ENCODE measurements at regions of chr10 and their contacts with region 1.

Region 1: GRCh38 chr10:72273410-72274212 is at the start of gene DDIT4:
- DNase-seq: peak; percentile 100
- ATAC-seq: peak; percentile 94
- H3K4me3 Mint-ChIP-seq: peak within 1 kb of the TSS; percentile 98
- H3K27ac Mint-ChIP-seq: peak within 1 kb of the TSS; percentile 98
- H3K4me1 Mint-ChIP-seq: peaks cover 50% of the 10 kb centered on the region
- H3K27me3 Mint-ChIP-seq: no peaks in the 10 kb centered on the region
- total RNA-seq, gene DDIT4: 291 to 293 TPM

Region 2: GRCh38 chr10:72108830-72109631 is 164.6 kb before region 1 on chr10:
- CTCF ChIA-PET with region 1: no interaction called
- DNase-seq: no peak
- ATAC-seq: no peak
- H3K4me3 Mint-ChIP-seq: no peak overlapping the region
- H3K27ac Mint-ChIP-seq: peak overlapping the region; percentile 52
- H3K4me1 Mint-ChIP-seq: peaks cover 41% of the 10 kb centered on the region
- H3K27me3 Mint-ChIP-seq: no peaks in the 10 kb centered on the region

Region 3: GRCh38 chr10:72133517-72133916 is 140.1 kb before region 1 on chr10:
- CTCF ChIA-PET with region 1: interaction called, 13 read pairs
- DNase-seq: no peak
- ATAC-seq: peak; percentile 30
- H3K4me3 Mint-ChIP-seq: no peak overlapping the region
- H3K27ac Mint-ChIP-seq: peak overlapping the region; percentile 40
- H3K4me1 Mint-ChIP-seq: peaks cover 37% of the 10 kb centered on the region
- H3K27me3 Mint-ChIP-seq: no peaks in the 10 kb centered on the region

Region 4: GRCh38 chr10:72223743-72224101 is 49.9 kb before region 1 on chr10:
- CTCF ChIA-PET with region 1: interaction called, 13 read pairs
- DNase-seq: no peak
- ATAC-seq: no peak
- H3K4me3 Mint-ChIP-seq: no peak overlapping the region
- H3K27ac Mint-ChIP-seq: peak overlapping the region; percentile 63
- H3K4me1 Mint-ChIP-seq: peaks cover 46% of the 10 kb centered on the region
- H3K27me3 Mint-ChIP-seq: no peaks in the 10 kb centered on the region

Region 5: GRCh38 chr10:72248468-72249151 is 25.0 kb before region 1 on chr10:
- CTCF ChIA-PET with region 1: interaction called, 12 read pairs
- DNase-seq: peak; percentile 93
- ATAC-seq: peak; percentile 91
- H3K4me3 Mint-ChIP-seq: peak overlapping the region; percentile 69
- H3K27ac Mint-ChIP-seq: peak overlapping the region; percentile 92
- H3K4me1 Mint-ChIP-seq: peaks cover 76% of the 10 kb centered on the region
- H3K27me3 Mint-ChIP-seq: no peaks in the 10 kb centered on the region

Region 6: DNA sequence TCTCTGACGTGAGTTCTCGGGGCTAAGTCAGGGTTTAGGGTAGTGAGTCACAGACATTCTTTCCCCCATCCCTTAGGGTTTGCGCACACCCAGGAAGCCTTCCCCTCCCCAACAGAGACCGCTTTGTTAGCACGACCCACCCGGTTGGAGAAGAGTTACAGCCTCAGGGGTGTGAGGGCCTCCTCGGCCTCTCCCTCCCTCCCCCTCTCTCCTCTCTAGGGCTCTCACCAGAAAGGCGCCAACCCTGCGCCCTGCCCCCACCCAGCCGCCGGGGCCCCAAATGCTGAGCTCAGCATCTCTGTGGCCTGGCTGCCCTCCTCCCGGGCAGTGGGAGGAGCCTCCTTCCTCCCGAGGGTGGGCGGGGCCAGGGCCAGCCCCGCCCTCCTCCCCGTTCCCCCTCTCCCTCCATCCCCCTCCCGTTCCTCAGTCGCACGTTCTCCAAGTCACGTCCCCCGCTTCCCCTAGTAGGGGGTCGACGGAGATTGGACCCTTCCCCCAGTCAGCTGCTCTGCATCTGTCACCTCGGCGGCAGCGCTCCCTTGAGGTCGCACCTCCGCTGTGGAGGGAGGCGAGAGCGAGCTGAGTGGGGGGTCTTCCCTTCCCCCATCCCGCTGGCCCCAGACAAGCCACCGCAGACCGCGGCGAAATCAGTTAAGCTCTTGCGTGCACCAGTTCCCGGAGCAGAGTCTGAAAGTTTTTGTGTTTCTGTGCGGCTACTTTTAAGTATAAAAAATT is 12.9 kb before region 1 on chr10:
- CTCF ChIA-PET with region 1: interaction called, 33 read pairs
- DNase-seq: peak; percentile 97
- ATAC-seq: peak; percentile 78
- H3K4me3 Mint-ChIP-seq: peak overlapping the region; percentile 68
- H3K27ac Mint-ChIP-seq: peak overlapping the region; percentile 98
- H3K4me1 Mint-ChIP-seq: peaks cover 55% of the 10 kb centered on the region
- H3K27me3 Mint-ChIP-seq: no peaks in the 10 kb centered on the region

Region 7: GRCh38 chr10:72292223-72292691 is 18.6 kb after region 1 on chr10:
- CTCF ChIA-PET with region 1: interaction called, 145 read pairs
- DNase-seq: peak; percentile 77
- ATAC-seq: peak; percentile 42
- H3K4me3 Mint-ChIP-seq: peak overlapping the region; percentile 7
- H3K27ac Mint-ChIP-seq: peak overlapping the region; percentile 92
- H3K4me1 Mint-ChIP-seq: peaks cover 65% of the 10 kb centered on the region
- H3K27me3 Mint-ChIP-seq: no peaks in the 10 kb centered on the region

Region 8: GRCh38 chr10:72297968-72298773 is 24.6 kb after region 1 on chr10:
- CTCF ChIA-PET with region 1: interaction called, 145 read pairs
- DNase-seq: peak; percentile 98
- ATAC-seq: peak; percentile 81
- H3K4me3 Mint-ChIP-seq: peak overlapping the region; percentile 77
- H3K27ac Mint-ChIP-seq: peak overlapping the region; percentile 99
- H3K4me1 Mint-ChIP-seq: peaks cover 59% of the 10 kb centered on the region
- H3K27me3 Mint-ChIP-seq: no peaks in the 10 kb centered on the region

Measured in activated CD8-positive, alpha-beta memory T cell treated with anti-CD3 and anti-CD28 coated beads, Interleukin-2, amount 10 ng/mL, durations not matched to agents 7 days and 5 days (primary cell).